Activated B cell treated with CpG ODN at 0.5 μM for 24 hours (primary cell): ENCODE measurements at regions of chr14 and their contacts with region 1.

Region 1: GRCh38 chr14:69611201-69612011 is at the start of gene SUSD6:
- DNase-seq: peak; percentile 87
- ATAC-seq: peak; percentile 68
- H3K4me3 Mint-ChIP-seq: peak within 1 kb of the TSS; percentile 97
- H3K27ac Mint-ChIP-seq: peak within 1 kb of the TSS; percentile 99
- H3K4me1 Mint-ChIP-seq: peaks cover 54% of the 10 kb centered on the region
- H3K27me3 Mint-ChIP-seq: no peaks in the 10 kb centered on the region
- CTCF ChIP-seq: no peak
- total RNA-seq, gene SUSD6: 63.5 and 67.1 TPM in 2 replicates

Region 2: DNA sequence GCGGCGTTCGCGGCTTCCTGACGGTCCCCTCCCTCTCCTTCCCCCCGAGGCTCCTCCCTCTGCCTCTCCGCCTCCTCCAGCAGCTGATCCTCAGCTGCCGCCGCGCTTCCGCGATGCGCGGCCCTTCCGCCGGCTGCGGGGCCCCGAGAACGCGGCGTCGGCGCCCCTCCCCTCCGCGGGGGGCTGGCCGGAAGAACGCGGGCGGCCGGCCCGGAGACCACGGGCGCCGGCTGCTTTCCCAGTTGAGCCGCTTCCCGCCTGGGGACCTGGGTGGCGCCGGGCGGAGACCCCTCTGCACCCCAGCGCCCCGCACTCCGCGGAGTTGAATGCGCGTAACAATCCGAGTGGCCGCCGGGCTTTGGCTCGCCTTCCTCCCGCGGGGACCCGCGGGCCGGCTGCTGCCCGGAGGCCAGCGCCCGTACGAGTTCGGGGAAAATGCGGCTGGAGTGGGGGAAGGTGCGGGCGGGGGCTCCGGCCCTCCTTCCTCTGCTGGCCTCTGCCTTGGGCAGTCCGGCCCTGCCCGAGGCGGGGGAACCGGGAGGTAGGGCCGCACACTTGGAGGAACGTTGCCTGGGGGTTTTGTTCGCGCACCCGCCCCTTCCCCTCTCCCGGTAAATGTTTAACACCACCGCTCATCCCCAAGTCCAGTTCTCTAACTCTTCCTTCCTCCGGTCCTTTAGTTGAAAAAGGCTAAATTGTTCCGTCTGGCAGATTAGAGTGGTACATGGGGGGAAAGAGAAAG is 458.1 kb before region 1 on chr14:
- CTCF ChIA-PET with region 1: no interaction called
- POLR2A ChIA-PET with region 1: no interaction called
- intact Hi-C with region 1: loop called (anchors 5 kb)
- DNase-seq: peak; percentile 81
- ATAC-seq: peak; percentile 93
- H3K4me3 Mint-ChIP-seq: peak overlapping the region; percentile 95
- H3K27ac Mint-ChIP-seq: peak overlapping the region; percentile 88
- H3K4me1 Mint-ChIP-seq: peaks cover 28% of the 10 kb centered on the region
- H3K27me3 Mint-ChIP-seq: no peaks in the 10 kb centered on the region
- CTCF ChIP-seq: no peak

Region 3: DNA sequence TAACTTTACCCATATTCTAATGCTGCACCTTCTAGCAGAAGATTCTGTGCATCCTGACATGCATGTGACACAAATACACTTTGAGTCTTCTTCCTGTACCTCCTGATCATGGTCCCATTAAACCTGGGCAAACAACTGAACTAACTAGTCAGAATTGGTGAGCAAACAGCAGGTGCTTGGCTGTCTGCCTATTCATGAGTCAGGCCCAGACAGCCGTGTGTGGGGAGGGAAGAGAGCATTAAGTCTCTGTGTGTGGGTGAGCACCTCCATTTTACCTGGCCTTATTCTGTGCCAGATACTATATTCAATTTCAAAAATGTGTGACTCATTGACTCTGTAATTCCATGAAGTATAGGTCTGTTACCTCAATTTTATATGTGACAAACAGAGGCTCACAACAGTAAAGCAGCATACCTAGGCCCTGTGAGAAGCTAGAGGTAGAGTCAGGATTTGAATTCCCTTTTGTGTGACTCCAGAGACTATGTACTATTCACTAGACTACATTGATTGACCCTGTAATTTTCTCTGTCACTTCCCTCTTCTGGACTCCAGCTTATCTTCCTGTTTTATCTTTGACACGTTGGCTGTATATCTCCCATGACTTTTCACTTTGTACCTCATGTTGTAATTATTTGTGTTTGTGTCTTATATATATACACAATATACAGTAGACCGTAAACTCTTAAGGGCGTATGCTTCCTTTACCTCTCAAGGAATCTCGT is 32.2 kb after region 1 on chr14:
- CTCF ChIA-PET with region 1: interaction called, 3 read pairs
- POLR2A ChIA-PET with region 1: interaction called, 15 read pairs
- intact Hi-C with region 1: loop called (anchors 1 kb)
- DNase-seq: no peak
- ATAC-seq: no peak
- H3K4me3 Mint-ChIP-seq: peak overlapping the region; percentile 52
- H3K27ac Mint-ChIP-seq: peak overlapping the region; percentile 85
- H3K4me1 Mint-ChIP-seq: peaks cover 91% of the 10 kb centered on the region
- H3K27me3 Mint-ChIP-seq: no peaks in the 10 kb centered on the region
- CTCF ChIP-seq: no peak

Region 4: GRCh38 chr14:69673578-69674305 is 62.3 kb after region 1 on chr14:
- CTCF ChIA-PET with region 1: interaction called, 4 read pairs
- POLR2A ChIA-PET with region 1: interaction called, 25 read pairs
- intact Hi-C with region 1: loop called (anchors 1 kb)
- DNase-seq: no peak
- ATAC-seq: peak; percentile 48
- H3K4me3 Mint-ChIP-seq: peak overlapping the region; percentile 33
- H3K27ac Mint-ChIP-seq: peak overlapping the region; percentile 86
- H3K4me1 Mint-ChIP-seq: peaks cover 82% of the 10 kb centered on the region
- H3K27me3 Mint-ChIP-seq: no peaks in the 10 kb centered on the region
- CTCF ChIP-seq: no peak

Region 5: DNA sequence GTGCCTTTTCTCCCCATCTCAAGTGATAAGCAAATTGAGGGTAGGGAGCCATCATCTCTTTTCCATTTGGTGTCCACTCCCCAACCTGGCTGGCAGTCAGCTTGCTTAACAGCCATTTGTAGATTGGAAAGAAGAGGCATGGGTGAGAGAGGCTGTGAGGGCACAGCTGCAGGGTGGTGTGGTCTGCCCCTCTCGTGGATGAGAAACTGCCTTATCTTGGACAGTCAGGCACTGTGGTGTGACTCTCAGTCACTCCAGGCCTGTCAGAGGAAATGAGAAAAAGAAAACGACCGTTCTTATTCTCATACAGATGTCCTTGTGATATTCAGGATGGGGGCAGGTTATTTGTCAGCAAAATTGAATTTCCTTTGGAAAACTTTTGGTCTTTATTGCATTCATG is 90.5 kb after region 1 on chr14:
- CTCF ChIA-PET with region 1: interaction called, 5 read pairs
- POLR2A ChIA-PET with region 1: interaction called, 16 read pairs
- intact Hi-C with region 1: no loop called
- DNase-seq: no peak
- ATAC-seq: no peak
- H3K4me3 Mint-ChIP-seq: no peak overlapping the region
- H3K27ac Mint-ChIP-seq: peak overlapping the region; percentile 51
- H3K4me1 Mint-ChIP-seq: peaks cover 86% of the 10 kb centered on the region
- H3K27me3 Mint-ChIP-seq: no peaks in the 10 kb centered on the region
- CTCF ChIP-seq: no peak

Region 6: DNA sequence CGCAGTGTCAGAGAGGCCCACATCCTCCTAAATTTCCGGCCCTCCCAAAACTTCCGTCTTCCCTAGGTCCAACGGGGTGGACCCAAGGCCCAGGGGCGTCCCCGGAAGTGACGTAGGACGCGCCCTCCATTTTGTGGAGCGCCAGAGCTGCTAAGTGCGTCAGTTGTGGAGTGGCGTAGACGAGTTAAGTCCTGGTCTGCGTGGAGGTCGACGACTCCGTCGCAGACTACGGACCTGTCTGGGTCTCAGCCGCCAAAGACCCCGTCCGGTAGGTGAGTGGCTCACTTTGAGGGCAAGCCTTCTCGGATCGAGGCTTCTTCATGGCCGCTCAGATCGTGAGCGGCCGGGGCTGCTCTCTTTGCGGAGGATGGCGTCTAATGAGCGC is 155.6 kb after region 1 on chr14 and contains the start of gene SRSF5:
- CTCF ChIA-PET with region 1: no interaction called
- POLR2A ChIA-PET with region 1: interaction called, 38 read pairs
- intact Hi-C with region 1: loop called (anchors 1 kb)
- DNase-seq: peak; percentile 92
- ATAC-seq: peak; percentile 78
- H3K4me3 Mint-ChIP-seq: peak within 1 kb of the TSS; percentile 98
- H3K27ac Mint-ChIP-seq: peak within 1 kb of the TSS; percentile 100
- H3K4me1 Mint-ChIP-seq: peaks cover 51% of the 10 kb centered on the region
- H3K27me3 Mint-ChIP-seq: no peaks in the 10 kb centered on the region
- CTCF ChIP-seq: no peak
- total RNA-seq, gene SRSF5: 394 and 422 TPM in 2 replicates